Psoas muscle (tissue), 8 donors: ENCODE measurements at regions of chr7 and their contacts with region 1.

Region 1: DNA sequence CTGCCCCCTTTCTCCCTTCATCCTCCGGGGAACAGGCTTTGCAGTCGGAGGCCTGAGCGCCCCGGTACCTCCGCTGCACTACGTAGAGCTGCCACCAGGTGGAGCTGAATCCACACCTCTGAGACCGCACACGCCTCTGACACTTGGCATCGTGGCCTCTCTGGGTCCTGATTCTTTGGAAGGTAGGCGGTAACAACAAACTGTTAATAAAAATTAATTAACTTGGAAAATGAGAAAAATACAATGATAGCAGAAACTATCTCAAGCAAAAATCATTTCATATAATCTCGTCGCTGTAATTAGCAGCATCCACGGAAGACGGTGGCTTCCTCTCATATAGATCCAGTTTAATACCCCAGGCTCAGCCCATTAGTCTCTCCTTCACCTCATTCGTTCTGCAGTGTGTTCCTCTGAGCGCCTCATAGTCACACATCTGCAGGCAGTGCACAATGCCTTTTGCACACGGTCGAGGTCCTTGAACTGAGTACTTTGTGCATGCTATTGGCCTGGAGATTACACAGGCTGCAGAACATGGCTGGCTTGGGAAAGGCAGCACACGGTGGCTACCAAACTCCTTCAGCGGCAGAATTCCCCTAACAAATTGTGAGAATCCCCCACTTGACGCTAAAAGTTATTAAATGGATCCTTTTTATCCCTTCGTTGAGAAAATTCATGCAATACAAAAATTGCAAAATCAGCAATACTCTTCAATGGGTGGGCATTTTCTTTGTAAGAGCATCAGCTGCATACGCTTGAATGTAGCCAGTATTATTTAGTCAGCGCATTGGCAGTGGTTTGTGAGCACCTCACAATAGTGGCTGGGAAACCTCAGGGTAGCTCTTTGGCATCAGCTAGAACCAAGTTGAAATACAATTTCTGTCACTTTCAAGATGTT is 18.7 kb downstream of the OR9A2 start:
- DNase-seq: peak; percentile 74 to 87
- ATAC-seq: peak; percentile 88 to 95 (median 88)
- H3K4me3 ChIP-seq: no peak overlapping the region
- H3K27ac ChIP-seq: no peak overlapping the region
- H3K4me1 ChIP-seq: no peaks in the 10 kb centered on the region
- H3K27me3 ChIP-seq: no peaks in the 10 kb centered on the region
- CTCF ChIP-seq: peak; percentile 97

Region 2: DNA sequence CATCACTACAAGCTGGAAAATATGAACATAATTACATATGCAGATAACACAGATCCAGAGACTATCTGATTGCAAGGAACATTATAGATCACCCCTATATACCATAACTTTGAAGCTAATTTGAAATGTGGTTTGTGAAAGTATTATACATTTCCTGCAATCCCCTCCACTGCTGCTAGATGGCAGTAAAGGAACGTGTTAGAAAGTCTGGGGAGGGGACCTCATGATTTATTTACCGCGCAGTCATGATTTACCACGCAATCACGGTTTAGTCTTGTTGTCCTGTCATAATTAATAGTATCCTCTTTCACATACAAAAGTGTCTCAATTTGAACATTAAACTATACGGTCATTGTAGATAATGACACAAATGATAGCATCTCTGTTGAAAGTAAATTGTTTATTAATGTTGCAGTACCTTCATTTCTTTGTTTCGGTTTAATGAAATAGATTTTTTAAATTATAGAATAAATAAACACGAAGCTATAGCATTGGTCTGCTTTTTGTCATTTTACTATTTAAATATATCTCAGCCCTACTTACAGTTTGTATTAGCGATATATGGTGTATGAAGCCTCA is 404.3 kb before region 1 on chr7:
- intact Hi-C with region 1: loop called in 1 of 2 experiments (anchors 10 kb)
- DNase-seq: no peak
- ATAC-seq: peak; percentile 52 to 80 (median 66)
- H3K4me3 ChIP-seq: peak overlapping the region; percentile 24
- H3K27ac ChIP-seq: no peak overlapping the region
- H3K4me1 ChIP-seq: no peaks in the 10 kb centered on the region
- H3K27me3 ChIP-seq: no peaks in the 10 kb centered on the region
- CTCF ChIP-seq: peak; percentile 89

Region 3: GRCh38 chr7:142853739-142854371 is 154.4 kb before region 1 on chr7:
- intact Hi-C with region 1: loop called (anchors 1 to 5 kb)
- DNase-seq: peak; percentile 47 to 73
- ATAC-seq: peak; percentile 72 to 83 (median 76)
- H3K4me3 ChIP-seq: peak overlapping the region; percentile 79
- H3K27ac ChIP-seq: no peak overlapping the region
- H3K4me1 ChIP-seq: no peaks in the 10 kb centered on the region
- H3K27me3 ChIP-seq: peaks cover 0 to 3% (median 0%) of the 10 kb centered on the region in 3 donors
- CTCF ChIP-seq: peak; percentile 75

Region 4: DNA sequence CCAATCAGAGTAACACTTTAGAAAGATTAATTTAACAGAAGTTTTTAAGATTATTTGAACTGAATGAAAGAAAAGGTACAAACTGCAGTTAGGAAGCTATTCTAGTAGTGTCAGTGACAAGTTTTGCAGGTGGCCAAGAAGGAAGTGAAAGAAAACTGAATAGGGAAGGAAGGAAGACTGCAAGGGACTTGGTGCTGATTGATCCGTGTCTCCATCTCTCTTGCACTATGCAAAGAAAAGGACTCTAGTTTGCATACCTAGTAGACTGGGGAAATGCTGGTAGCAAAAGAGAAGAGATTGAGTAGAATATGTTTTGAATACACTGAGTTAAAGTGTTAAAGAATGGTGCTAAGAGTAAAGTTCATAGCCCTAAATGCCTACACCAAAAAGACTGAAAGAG is 76.9 kb after region 1 on chr7:
- intact Hi-C with region 1: no loop called
- DNase-seq: no peak
- ATAC-seq: no peak
- H3K4me3 ChIP-seq: no peak overlapping the region
- H3K27ac ChIP-seq: no peak overlapping the region
- H3K4me1 ChIP-seq: no peaks in the 10 kb centered on the region
- H3K27me3 ChIP-seq: no peaks in the 10 kb centered on the region
- CTCF ChIP-seq: no peak

Region 5: GRCh38 chr7:143214789-143215679 is 206.8 kb after region 1 on chr7:
- intact Hi-C with region 1: loop called (anchors 1 to 2 kb)
- DNase-seq: peak in 1 of 2 donors; percentile 31
- ATAC-seq: peak; percentile 81 to 93 (median 84)
- H3K4me3 ChIP-seq: no peak overlapping the region
- H3K27ac ChIP-seq: no peak overlapping the region
- H3K4me1 ChIP-seq: no peaks in the 10 kb centered on the region
- H3K27me3 ChIP-seq: no peaks in the 10 kb centered on the region
- CTCF ChIP-seq: peak; percentile 100